Posterior vena cava (tissue), 2 donors: ENCODE measurements at regions of chr14 and their contacts with region 1.

Region 1: GRCh38 chr14:93892923-93893558 is 34.1 kb upstream of the FAM181A start:
- DNase-seq: peak; percentile 91

Region 2: DNA sequence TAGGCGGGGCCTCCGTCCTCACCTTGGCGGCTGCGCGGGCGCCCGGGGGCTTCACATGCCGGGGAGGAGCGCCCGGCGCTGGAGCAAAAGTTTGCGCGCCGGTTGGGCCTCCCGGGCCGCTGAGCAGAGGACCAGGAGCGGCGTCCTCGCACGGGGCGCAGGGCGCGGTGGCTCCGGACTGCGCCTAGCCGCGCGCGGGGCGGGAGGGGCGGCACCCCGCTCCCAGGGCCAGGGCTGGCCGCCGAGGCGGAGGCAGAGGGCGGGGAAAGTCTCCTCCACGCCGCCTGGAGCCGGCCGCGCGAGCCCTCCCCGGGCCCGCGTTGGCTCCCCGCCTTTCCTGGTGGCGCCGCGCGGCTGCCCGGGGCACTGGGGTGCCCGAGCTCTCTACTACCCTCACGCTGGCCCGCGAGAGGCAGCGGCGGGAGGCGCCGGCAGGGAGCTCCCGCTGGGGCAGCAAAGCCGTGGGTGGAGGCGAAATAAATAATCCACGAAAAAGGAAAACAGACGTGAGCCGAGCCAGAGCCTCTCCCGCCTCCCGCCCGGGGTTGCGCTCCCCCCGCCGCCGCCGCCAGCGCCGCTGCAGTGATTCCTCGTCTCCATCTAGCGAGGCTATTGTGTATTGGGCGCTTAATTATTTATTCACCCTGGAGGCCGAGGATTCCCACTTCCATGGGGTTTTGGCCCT is 104.4 kb before region 1 on chr14:
- intact Hi-C with region 1: loop called in 1 of 2 experiments (anchors 5 kb)
- DNase-seq: no peak

Region 3: GRCh38 chr14:93959239-93960107 is 66.4 kb after region 1 on chr14:
- intact Hi-C with region 1: no loop called
- DNase-seq: no peak

Region 4: GRCh38 chr14:94282991-94283723 is 390.1 kb after region 1 on chr14:
- intact Hi-C with region 1: loop called in 1 of 2 experiments (anchors 5 kb)
- DNase-seq: no peak